H1 (cell line): ENCODE measurements at regions of chr6 and their contacts with region 1.

Region 1: GRCh38 chr6:95091823-95092436 is 485.4 kb upstream of the MANEA start:
- DNase-seq: no peak
- H3K4me3 ChIP-seq: no peak overlapping the region
- H3K27ac ChIP-seq: no peak overlapping the region
- H3K4me1 ChIP-seq: no peaks in the 10 kb centered on the region
- H3K27me3 ChIP-seq: no peaks in the 10 kb centered on the region
- CTCF ChIP-seq: peak in 2 of 3 experiments; percentile 15 to 45; a peak in 2 of 4 replicates
- EP300 ChIP-seq: no peak
- POLR2A ChIP-seq: no peak
- RAD21 ChIP-seq: peak; percentile 76 to 81

Region 2: DNA sequence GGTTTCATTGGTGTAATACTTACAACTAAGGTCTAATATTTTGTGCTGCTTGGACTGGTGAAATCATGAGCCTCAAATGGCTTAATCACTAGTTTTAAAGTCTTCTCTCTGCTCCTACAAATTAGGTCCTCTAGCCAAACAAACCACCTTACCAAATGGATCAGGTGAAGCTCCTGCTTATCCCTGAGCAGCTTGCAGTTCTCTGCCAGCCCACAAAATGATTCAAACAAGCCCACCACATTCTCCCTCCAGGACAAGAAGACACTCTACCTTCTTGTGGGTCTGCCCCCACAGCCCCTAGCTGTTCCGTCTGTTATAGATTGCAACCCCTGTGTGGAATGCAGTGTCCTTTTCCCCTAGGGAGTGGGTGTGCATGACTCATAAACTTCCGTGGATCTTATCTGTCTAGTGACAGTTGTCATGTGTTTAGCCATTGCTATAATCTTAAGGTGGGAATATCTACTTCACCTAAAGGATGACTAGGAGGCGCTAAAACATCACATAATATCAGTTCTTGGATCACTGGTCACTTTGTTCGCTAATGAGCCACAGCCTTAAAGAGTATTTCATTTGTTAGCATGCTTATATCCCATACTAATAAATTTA is 455.0 kb before region 1 on chr6:
- CTCF ChIA-PET with region 1: interaction called, 15 read pairs
- POLR2A ChIA-PET with region 1: no interaction called
- DNase-seq: peak in 1 of 2 experiments; percentile 48
- H3K4me3 ChIP-seq: no peak overlapping the region
- H3K27ac ChIP-seq: no peak overlapping the region
- H3K4me1 ChIP-seq: no peaks in the 10 kb centered on the region
- H3K27me3 ChIP-seq: no peaks in the 10 kb centered on the region
- CTCF ChIP-seq: peak in 2 of 3 experiments; percentile 44 to 56; a peak in 2 of 4 replicates
- EP300 ChIP-seq: no peak
- POLR2A ChIP-seq: no peak
- RAD21 ChIP-seq: peak; percentile 78 to 83